ENCODE measurements at regions of chr1 and their contacts with region 1.

Region 1: DNA sequence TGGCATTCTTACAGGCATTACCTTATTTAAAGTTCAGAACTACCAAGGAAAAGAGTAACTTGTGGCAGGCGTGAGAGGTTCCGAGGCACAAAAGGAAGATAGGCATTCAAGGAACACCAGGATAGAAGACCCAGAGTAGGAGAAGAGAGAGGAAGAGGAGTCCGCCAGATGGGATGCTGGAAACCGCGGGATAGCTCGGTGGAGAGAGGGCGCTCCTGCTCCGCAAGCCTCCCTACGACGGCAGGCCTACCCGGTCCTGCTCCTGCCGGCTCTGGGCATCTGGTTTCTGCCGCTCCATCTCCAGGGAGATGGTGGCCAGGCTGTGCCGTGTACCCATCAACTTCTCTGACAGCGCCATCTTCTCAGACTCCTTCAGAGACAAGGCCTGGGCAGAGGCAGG is 5.4 kb upstream of the NBPF1 start:
- DNase-seq: no peak
- H3K4me3 ChIP-seq: no peak overlapping the region
- H3K4me3 Mint-ChIP-seq: no peak overlapping the region
- H3K27ac ChIP-seq: no peak overlapping the region
- H3K27ac Mint-ChIP-seq: no peak overlapping the region
- H3K4me1 ChIP-seq: peaks cover 3 to 5% of the 10 kb centered on the region in 2 donors
- H3K4me1 Mint-ChIP-seq: no peaks in the 10 kb centered on the region
- H3K27me3 ChIP-seq: peaks cover 7 to 11% of the 10 kb centered on the region in 2 donors
- H3K27me3 Mint-ChIP-seq: no peaks in the 10 kb centered on the region
- CTCF ChIP-seq: no peak

Region 2: DNA sequence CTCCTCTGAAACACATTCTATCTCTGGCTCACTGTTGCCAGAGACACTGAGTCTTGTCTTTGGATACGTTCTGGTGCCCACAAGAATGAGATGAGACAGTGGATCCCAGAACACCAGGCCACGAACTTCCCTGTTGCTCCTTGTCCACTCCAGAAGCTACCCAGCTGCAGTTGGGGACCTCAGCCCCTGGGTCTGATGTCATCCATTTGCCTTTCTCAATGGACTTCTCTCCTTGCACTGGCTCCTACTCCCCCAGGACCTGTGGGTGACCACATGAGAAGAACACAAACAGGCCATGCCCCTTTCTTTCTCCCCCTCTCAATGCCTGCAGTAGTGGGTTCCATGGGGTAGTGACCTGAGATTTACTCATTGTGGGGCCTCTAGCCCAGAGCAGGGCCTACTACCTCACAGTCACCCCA is 11.3 kb before region 1 on chr1:
- intact Hi-C with region 1: loop called in 1 of 2 experiments (anchors 2 kb)
- DNase-seq: no peak
- H3K4me3 ChIP-seq: no peak overlapping the region
- H3K4me3 Mint-ChIP-seq: no peak overlapping the region
- H3K27ac ChIP-seq: no peak overlapping the region
- H3K27ac Mint-ChIP-seq: no peak overlapping the region
- H3K4me1 ChIP-seq: peaks cover 7 to 8% of the 10 kb centered on the region in 2 donors
- H3K4me1 Mint-ChIP-seq: no peaks in the 10 kb centered on the region
- H3K27me3 ChIP-seq: peaks cover 4 to 7% of the 10 kb centered on the region in 2 donors
- H3K27me3 Mint-ChIP-seq: no peaks in the 10 kb centered on the region
- CTCF ChIP-seq: no peak

Region 3: DNA sequence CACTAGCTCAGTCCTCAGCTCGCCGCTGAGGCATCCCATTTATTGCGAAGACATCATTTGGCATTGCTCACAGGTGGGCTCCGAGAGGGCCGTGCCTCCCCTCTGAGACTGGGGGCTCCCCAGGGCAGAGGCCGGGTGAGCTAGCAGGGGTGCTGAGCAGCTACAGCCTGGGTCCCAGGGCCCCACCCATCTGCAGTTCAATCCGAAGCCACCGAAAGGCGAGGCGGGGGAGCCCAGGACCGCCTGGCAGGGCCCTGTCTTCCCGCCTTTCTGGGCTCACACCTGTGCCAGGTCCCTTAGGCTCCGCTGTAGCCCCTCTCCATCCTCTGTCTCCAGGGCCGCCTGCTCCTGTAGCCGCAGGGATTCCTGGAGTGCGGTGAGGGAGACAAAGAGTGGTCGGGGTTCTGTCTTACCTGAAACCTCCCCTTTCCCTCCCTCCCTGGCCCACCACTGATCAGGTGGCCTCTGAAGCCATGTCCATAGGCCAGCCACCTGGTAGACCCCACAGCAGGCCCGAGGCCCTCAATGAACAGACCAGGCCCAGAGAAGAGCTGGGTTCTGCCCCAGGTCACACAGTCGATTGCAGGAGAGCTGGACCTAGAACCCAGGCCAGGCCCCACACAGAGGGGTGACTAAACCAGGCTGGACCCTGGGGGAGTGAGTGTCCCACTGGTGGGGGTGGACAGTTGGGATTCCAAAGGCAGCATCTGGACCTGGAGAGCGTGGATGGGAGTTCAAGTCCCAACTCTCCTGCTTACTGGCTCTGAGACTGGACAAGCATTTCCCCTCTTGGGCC is 12.7 kb after region 1 on chr1:
- intact Hi-C with region 1: loop called in 1 of 2 experiments (anchors 2 kb)
- DNase-seq: no peak
- H3K4me3 ChIP-seq: no peak overlapping the region
- H3K4me3 Mint-ChIP-seq: no peak overlapping the region
- H3K27ac ChIP-seq: no peak overlapping the region
- H3K27ac Mint-ChIP-seq: peak overlapping the region in 1 of 7 donors; percentile 9
- H3K4me1 ChIP-seq: no peaks in the 10 kb centered on the region
- H3K4me1 Mint-ChIP-seq: no peaks in the 10 kb centered on the region
- H3K27me3 ChIP-seq: no peaks in the 10 kb centered on the region
- H3K27me3 Mint-ChIP-seq: peaks cover 0 to 3% (median 2%) of the 10 kb centered on the region in 3 donors
- CTCF ChIP-seq: no peak

Region 4: GRCh38 chr1:16946646-16947045 is 327.9 kb after region 1 on chr1:
- intact Hi-C with region 1: loop called (anchors 1 kb)
- DNase-seq: no peak
- H3K4me3 ChIP-seq: no peak overlapping the region
- H3K4me3 Mint-ChIP-seq: no peak overlapping the region
- H3K27ac ChIP-seq: no peak overlapping the region
- H3K27ac Mint-ChIP-seq: no peak overlapping the region
- H3K4me1 ChIP-seq: no peaks in the 10 kb centered on the region
- H3K4me1 Mint-ChIP-seq: no peaks in the 10 kb centered on the region
- H3K27me3 ChIP-seq: no peaks in the 10 kb centered on the region
- H3K27me3 Mint-ChIP-seq: peaks cover 0 to 2% (median 0%) of the 10 kb centered on the region in 3 donors
- CTCF ChIP-seq: no peak